ENCODE measurements at regions of chr5 and their contacts with region 1.

Region 1: DNA sequence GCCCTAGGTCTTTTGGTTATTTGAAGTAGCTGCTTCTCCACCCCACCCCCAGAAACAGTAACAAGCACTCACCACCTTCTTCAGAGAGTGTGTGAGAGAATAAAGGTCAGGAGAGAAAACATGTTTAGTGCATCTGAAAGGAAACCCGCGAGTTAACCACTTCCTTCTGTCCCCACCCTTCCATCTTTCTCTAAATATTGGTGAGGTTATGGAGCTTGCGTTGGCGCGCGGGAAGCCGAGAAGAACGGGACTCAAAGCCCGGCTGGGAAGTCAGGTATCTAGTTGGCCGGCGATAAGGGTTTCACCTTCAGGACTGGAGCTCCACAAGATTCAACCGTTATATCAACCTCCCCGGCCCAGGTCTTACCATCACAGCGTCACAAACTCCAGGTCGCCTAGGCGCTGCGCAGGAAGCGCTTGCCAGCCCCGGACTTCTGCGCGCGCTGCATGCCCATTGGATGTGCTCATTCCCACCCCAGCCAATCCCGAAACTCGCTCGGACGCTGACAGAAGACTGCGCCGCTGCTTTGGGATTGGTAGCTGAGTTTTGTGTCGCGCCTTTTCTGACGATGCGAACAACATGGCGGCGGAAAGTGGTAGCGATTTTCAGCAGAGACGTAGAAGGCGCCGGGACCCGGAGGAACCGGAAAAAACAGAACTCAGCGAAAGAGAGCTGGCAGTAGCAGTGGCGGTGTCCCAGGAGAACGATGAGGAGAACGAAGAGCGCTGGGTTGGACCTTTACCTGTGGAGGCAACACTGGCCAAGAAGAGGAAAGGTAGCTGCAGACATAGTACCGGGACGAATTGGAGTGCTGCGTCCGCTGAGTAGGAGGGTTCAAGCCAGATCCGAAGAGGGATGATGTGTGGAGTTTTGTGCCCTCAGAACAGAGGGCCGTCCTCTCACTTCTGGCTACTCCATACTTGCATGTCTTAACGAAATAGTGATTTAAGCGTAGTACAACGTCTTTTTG is at the starts of genes CENPK and PPWD1:
- DNase-seq: peak; percentile 81
- ATAC-seq: peak; percentile 99
- H3K4me3 Mint-ChIP-seq: peak within 1 kb of the TSS; percentile 96
- H3K27ac Mint-ChIP-seq: peak within 1 kb of the TSS; percentile 97
- H3K4me1 Mint-ChIP-seq: peaks cover 41% of the 10 kb centered on the region
- H3K27me3 Mint-ChIP-seq: no peaks in the 10 kb centered on the region
- CTCF ChIP-seq: no peak
- total RNA-seq, gene CENPK: 10.7 and 15.1 TPM in 2 replicates
- total RNA-seq, gene PPWD1: 57.8 and 69.7 TPM in 2 replicates

Region 2: DNA sequence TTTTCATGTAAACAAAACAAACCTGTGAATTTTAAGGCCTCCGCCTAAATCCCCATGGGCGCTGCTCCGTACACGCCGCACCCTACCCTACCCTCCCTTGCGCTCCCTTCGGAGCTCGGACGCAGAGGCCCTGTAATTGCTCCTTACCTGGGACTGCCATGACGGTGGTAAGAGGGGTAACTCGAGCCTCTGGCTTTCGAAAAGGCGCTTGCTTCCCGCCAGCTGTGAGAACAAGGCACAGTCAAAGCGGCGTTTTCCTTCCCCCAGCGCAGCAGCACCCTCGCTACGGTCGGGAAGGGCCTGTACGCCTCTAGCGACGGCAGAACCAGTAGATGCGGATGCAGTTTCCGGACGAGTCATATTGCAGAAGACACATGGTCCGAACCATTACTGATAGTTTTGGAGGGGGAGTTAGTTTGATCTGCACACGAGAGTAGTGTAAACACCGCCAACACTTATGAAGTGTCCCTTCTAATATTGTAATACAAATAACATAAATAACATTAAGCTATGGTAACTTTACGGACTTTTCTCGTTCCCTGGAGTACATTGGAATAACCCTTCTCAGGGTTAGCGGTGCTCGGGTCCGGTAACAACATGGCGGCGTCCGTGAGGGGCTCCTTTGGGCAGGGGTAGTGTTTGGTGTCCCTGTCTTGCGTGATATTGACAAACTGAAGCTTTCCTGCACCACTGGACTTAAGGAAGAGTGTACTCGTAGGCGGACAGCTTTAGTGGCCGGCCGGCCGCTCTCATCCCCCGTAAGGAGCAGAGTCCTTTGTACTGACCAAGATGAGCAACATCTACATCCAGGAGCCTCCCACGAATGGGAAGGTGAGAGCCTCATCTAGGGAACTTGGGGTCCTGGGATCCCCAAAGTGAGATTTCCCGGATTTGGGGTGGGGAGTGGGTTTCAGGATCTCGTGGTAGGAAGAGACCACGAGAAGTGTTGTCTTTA is 794.4 kb before region 1 on chr5 and contains the starts of genes CWC27 and SREK1IP1:
- CTCF ChIA-PET with region 1: no interaction called
- POLR2A ChIA-PET with region 1: interaction called, 6 read pairs
- intact Hi-C with region 1: loop called (anchors 1 kb)
- DNase-seq: peak; percentile 69
- ATAC-seq: peak; percentile 95
- H3K4me3 Mint-ChIP-seq: peak within 1 kb of the TSS; percentile 100
- H3K27ac Mint-ChIP-seq: peak within 1 kb of the TSS; percentile 99
- H3K4me1 Mint-ChIP-seq: peaks cover 62% of the 10 kb centered on the region
- H3K27me3 Mint-ChIP-seq: no peaks in the 10 kb centered on the region
- CTCF ChIP-seq: no peak
- total RNA-seq, gene CWC27: 28.9 and 29.2 TPM in 2 replicates
- total RNA-seq, gene SREK1IP1: 21.7 and 22.2 TPM in 2 replicates

Region 3: GRCh38 chr5:64811050-64811640 is 751.9 kb before region 1 on chr5:
- CTCF ChIA-PET with region 1: interaction called, 3 read pairs
- POLR2A ChIA-PET with region 1: no interaction called
- intact Hi-C with region 1: loop called (anchors 1 kb)
- DNase-seq: no peak
- ATAC-seq: no peak
- H3K4me3 Mint-ChIP-seq: no peak overlapping the region
- H3K27ac Mint-ChIP-seq: no peak overlapping the region
- H3K4me1 Mint-ChIP-seq: no peaks in the 10 kb centered on the region
- H3K27me3 Mint-ChIP-seq: no peaks in the 10 kb centered on the region
- CTCF ChIP-seq: no peak

Region 4: DNA sequence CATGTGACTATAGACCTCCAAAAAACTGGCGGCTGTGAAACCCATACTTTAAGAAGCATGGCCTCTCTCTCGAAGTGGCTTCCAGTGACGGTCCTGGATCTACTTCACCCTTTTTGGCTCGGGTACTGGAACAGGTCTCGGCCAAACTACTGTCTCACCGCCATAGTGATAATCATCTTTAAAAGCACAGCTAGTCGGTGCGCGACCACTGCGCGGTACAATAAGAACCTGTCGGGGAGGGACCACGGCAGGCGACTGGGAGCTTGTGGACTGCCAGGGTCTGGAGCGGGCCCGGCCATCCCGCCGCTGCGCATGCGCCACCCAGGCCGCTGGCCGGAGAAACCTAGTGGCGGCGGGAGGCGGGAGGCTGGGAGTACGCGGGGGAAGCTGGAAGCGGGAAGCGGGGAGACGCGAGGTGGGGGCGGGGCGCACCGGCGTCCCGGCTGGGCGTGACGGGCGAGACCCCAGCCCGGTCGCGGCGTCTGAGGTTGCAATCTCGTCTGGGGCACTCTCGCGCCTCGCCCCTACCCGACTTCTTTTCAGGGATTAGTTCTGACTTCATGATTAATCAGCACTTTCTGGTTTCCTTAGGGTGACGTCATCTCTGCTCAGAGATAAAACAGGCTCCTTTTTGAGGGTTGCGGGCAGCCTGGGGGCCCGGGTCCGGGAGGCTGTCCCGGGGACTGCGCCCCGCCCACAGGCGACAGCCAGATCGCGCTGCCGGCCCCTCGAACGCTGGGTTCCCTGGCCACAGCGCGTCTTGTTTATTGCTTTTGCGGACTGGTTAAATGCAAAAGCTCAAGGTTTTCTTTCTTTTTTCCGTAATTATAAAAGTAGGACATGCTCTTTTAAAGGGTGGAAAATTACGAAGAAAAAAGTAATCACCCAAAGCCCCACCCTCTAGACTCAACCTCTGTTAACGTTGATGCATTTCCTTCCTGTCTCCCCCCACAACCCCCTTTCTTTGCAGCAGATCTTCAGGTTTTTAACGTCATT is 527.5 kb before region 1 on chr5:
- CTCF ChIA-PET with region 1: no interaction called
- POLR2A ChIA-PET with region 1: no interaction called
- intact Hi-C with region 1: loop called (anchors 5 kb)
- DNase-seq: peak; percentile 70
- ATAC-seq: peak; percentile 80
- H3K4me3 Mint-ChIP-seq: peak overlapping the region; percentile 83
- H3K27ac Mint-ChIP-seq: peak overlapping the region; percentile 77
- H3K4me1 Mint-ChIP-seq: peaks cover 32% of the 10 kb centered on the region
- H3K27me3 Mint-ChIP-seq: no peaks in the 10 kb centered on the region
- CTCF ChIP-seq: no peak

Region 5: DNA sequence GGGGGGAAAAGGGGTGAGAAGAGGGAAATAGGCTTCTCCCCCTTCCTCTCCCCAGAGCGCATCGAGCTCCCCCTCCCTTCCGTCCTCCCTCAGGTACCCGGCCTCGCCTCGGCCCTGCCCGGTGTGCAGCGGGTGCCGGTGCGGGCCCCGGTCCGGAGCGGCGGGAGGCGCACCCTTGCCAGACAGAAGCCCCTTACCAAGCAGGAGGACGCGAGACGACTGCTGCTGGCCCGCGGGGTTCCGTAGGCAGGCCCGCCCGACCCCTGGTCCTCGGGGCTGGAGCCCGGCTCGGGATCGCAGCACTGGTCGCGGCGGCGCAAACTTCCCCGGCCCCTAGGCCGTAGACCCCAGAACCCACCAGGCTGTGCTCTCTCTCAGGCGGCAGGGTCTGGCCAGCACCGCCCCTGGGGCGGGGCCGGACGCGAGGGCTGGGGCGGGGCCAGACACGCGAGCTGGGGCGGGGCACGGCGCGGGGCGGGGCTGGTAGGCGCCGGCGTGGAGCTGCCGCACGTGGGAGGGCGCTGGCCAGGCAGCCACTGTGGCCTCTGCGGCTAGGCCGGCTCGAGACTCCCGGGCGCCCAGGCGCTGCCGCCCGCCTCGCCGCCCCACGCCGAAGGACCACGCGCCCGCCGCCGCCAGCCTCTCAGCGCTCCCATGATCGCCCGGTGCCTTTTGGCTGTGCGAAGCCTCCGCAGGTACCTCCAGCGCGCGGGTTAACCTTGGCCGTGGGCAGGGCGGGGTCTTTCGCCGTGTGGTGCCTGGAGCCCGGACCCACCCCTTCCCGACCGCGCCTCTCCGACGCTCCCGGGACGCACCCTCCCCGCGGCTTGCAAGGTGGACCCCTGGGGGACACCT is 158.9 kb after region 1 on chr5 and contains the starts of genes NLN and SGTB:
- CTCF ChIA-PET with region 1: no interaction called
- POLR2A ChIA-PET with region 1: no interaction called
- intact Hi-C with region 1: loop called (anchors 1 kb)
- DNase-seq: peak; percentile 92
- ATAC-seq: peak; percentile 97
- H3K4me3 Mint-ChIP-seq: peak within 1 kb of the TSS; percentile 89
- H3K27ac Mint-ChIP-seq: peak within 1 kb of the TSS; percentile 88
- H3K4me1 Mint-ChIP-seq: peaks cover 24% of the 10 kb centered on the region
- H3K27me3 Mint-ChIP-seq: no peaks in the 10 kb centered on the region
- CTCF ChIP-seq: no peak
- total RNA-seq, gene NLN: 14.2 and 16.5 TPM in 2 replicates
- total RNA-seq, gene SGTB: 7.1 and 9.5 TPM in 2 replicates

Measured in activated B cell treated with CpG ODN at 0.5 μM for 24 hours (primary cell).